PC-3 (cell line): ENCODE measurements at regions of chr2 and their contacts with region 1.

Region 1: GRCh38 chr2:150705767-150706166 is 218.3 kb upstream of the RND3 start:
- DNase-seq: peak; percentile 31
- ATAC-seq: peak; percentile 44
- H3K4me3 ChIP-seq: no peak overlapping the region
- H3K27ac ChIP-seq: peak overlapping the region; percentile 71
- H3K4me1 ChIP-seq: peaks cover 34% of the 10 kb centered on the region
- H3K27me3 ChIP-seq: no peaks in the 10 kb centered on the region
- CTCF ChIP-seq: no peak

Region 2: DNA sequence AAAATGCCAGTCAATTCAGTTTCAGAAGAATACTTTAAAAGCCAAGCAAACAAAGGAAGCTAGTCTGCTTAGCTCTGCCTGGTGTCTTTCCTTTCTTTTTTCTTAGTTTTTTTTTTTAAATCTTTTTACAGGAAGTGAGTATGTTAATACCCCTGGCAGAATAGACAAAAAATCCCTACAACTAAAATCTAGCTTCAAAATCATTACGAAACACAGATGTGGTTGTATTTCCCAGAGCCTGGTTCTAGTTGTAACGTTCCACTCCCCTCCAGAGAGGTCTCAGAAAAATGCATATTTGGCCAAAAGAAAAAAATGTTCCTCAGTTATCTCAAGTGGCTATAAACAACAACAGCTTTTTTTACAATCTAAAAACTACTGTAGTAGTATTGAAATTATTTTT is 16.2 kb before region 1 on chr2:
- CTCF ChIA-PET with region 1: no interaction called
- POLR2A ChIA-PET with region 1: no interaction called
- intact Hi-C with region 1: loop called (anchors 2 kb)
- DNase-seq: no peak
- ATAC-seq: no peak
- H3K4me3 ChIP-seq: no peak overlapping the region
- H3K27ac ChIP-seq: no peak overlapping the region
- H3K4me1 ChIP-seq: peaks cover 28% of the 10 kb centered on the region
- H3K27me3 ChIP-seq: no peaks in the 10 kb centered on the region
- CTCF ChIP-seq: no peak

Region 3: DNA sequence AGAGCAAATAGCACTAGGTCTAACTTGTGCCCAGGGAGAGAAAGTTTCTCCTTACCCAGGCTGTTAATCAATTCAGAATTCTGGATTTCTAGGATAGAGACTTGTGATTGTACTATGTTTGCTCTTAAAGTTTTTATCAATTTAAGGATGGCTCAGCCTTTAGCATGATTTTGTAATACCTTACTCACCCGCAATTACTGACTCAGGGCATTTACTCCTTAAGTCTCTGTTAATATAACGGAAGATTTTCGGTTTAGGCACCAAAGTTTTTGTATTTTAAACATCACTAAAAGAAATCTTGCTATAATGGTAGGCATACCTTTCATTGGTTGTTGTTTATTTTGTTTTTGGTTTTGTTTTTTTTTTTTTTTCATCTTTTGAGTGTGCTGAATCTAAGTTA is 197.7 kb after region 1 on chr2:
- CTCF ChIA-PET with region 1: no interaction called
- POLR2A ChIA-PET with region 1: no interaction called
- intact Hi-C with region 1: no loop called
- DNase-seq: peak; percentile 29
- ATAC-seq: no peak
- H3K4me3 ChIP-seq: no peak overlapping the region
- H3K27ac ChIP-seq: no peak overlapping the region
- H3K4me1 ChIP-seq: no peaks in the 10 kb centered on the region
- H3K27me3 ChIP-seq: no peaks in the 10 kb centered on the region
- CTCF ChIP-seq: no peak

Region 4: DNA sequence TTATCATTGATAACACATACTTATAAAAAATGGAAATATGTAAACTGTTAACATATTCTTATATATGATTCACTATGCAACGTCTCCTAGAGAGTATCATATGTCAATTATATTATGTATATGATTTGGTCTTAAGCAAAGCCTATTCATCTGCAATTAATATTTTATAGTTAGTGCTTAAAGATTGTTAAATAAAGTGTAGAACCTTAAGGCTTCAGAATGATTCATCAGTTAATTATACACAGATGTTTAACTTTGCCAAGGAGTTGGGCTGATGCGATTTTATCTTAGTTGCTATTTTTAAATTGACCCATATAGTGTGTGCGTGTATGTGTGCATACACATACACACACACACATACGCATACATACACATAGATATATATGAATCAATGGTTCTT is 232.8 kb after region 1 on chr2:
- CTCF ChIA-PET with region 1: no interaction called
- POLR2A ChIA-PET with region 1: no interaction called
- intact Hi-C with region 1: loop called (anchors 10 kb)
- DNase-seq: peak; percentile 33
- ATAC-seq: peak; percentile 72
- H3K4me3 ChIP-seq: no peak overlapping the region
- H3K27ac ChIP-seq: no peak overlapping the region
- H3K4me1 ChIP-seq: peaks cover 17% of the 10 kb centered on the region
- H3K27me3 ChIP-seq: no peaks in the 10 kb centered on the region
- CTCF ChIP-seq: no peak

Region 5: DNA sequence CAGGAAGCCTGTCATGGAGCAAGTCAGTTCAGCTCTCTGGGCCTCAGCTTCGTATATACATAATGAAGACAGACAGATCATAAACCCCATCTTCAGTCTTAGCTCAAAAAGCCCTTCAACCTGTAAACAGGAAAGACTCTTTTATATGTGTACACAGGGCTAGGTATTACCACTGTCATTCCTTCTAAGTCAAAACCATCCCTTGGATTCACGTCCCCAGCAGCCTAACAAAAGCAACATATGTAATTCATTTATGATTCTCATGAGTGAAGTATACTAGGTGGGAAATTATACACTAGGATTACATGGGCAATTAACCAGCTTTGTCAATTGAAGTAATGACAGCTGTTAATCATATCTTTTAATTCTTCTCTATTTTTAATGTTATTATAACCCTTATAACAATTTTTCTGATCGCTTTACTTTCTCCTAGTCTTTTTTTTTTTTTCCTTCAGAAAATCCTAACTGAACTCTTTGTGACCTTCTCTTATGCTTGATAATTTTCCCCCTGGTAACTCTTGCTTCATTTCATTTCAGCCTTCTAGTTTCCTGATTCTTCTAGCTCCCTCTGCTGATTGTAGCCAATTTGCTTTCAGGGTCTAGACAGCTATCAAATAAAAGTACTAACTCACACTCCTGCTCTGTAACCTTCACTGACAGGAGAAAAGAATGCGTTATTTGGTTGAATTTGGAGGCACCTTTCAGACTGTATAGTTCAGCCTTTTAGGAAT is 456.2 kb after region 1 on chr2:
- CTCF ChIA-PET with region 1: no interaction called
- POLR2A ChIA-PET with region 1: no interaction called
- intact Hi-C with region 1: loop called (anchors 10 kb)
- DNase-seq: peak; percentile 51
- ATAC-seq: peak; percentile 70
- H3K4me3 ChIP-seq: no peak overlapping the region
- H3K27ac ChIP-seq: no peak overlapping the region
- H3K4me1 ChIP-seq: no peaks in the 10 kb centered on the region
- H3K27me3 ChIP-seq: no peaks in the 10 kb centered on the region
- CTCF ChIP-seq: peak; percentile 60